ENCODE measurements at regions of chr17 and their contacts with region 1.

Region 1: GRCh38 chr17:42183741-42184711 is 1.2 kb downstream of the HCRT start:
- DNase-seq: peak; percentile 87
- ATAC-seq: peak; percentile 87

Region 2: DNA sequence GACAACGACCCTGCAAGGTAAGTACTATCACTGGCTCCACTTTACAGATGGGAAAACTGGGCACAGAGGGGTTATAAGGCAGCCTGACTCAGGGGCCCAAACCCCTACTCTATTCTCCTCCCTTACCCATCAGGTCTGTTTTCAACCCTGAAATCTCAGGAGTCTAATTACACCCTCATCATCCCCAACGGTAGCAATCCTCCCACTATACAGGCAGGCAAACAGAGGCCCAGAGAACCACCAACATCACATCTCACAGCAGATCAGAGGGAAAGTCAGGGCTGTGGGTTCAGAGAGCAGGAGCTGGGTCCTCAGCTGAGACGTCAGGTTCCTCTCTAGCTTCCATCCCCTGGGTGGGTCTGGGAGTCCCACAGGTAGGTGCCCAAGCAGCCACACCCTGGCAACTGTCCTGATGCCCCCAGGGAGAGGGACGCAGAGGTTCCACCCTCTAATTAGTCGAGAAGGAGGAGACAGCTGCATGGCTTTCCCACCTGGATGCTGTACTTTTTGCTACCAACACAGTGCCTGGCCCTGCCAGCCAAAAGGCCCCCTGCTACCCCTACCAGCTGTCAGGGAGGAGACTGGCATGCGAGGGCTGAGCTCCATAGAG is 413.9 kb before region 1 on chr17:
- intact Hi-C with region 1: no loop called
- DNase-seq: no peak
- ATAC-seq: no peak

Region 3: GRCh38 chr17:42527273-42527703 is 343.3 kb after region 1 on chr17:
- intact Hi-C with region 1: loop called (anchors 10 kb)
- DNase-seq: no peak
- ATAC-seq: peak; percentile 82